ENCODE measurements at regions of chr2 and their contacts with region 1.

Region 1: DNA sequence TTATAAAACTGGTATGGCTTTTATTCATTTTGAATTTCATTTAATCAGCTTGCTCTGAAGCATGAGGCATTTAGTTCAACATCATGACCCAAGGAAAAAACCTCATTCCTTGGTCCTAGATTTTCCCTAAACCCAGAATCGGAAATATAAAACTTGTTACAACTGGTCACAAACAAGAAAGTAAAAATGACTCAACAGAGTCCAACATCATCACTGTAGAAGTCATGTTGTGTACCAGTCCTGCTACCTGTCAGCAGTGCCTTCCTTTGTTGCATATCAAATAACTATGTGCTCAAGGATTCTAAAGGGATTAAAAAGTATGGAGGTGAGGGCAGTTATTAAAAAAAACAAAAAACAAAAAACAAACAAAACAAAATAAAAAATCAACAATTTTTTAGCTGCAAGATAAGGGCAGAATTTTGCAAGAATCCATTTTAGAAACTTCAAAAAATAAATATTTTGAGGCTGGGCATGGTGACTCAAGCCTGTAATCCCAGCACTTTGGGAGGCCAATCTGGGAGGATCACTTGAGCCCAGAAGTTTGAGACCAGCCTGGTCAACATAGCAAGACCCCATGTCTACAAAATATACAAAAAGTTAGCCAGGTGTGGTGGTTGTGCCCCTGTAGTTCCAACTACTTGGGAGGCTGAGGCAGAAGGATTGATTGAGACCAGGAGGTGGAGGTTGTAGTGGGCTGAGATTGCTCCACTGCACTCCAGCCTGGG is 18.4 kb downstream of the NCKAP1 start:
- DNase-seq: peak; percentile 87
- H3K4me3 ChIP-seq: no peak overlapping the region
- H3K27ac ChIP-seq: peak overlapping the region; percentile 35
- H3K4me1 ChIP-seq: peaks cover 18% of the 10 kb centered on the region
- H3K27me3 ChIP-seq: no peaks in the 10 kb centered on the region
- CTCF ChIP-seq: no peak

Region 2: GRCh38 chr2:183037553-183038340 is 17.9 kb after region 1 on chr2:
- CTCF ChIA-PET with region 1: no interaction called
- dilution Hi-C with region 1: no loop called
- in situ Hi-C with region 1: no loop called
- intact Hi-C with region 1: loop called (anchors 2 kb)
- DNase-seq: peak; percentile 55
- H3K4me3 ChIP-seq: peak overlapping the region; percentile 62 to 99 (median 95)
- H3K27ac ChIP-seq: peak overlapping the region; percentile 95
- H3K4me1 ChIP-seq: peaks cover 13% of the 10 kb centered on the region
- H3K27me3 ChIP-seq: peaks cover 2% of the 10 kb centered on the region
- CTCF ChIP-seq: no peak

Region 3: GRCh38 chr2:183248866-183249567 is 229.1 kb after region 1 on chr2:
- CTCF ChIA-PET with region 1: interaction called, 15 read pairs
- dilution Hi-C with region 1: no loop called
- in situ Hi-C with region 1: no loop called
- intact Hi-C with region 1: no loop called
- DNase-seq: peak; percentile 42
- H3K4me3 ChIP-seq: no peak overlapping the region
- H3K27ac ChIP-seq: peak overlapping the region; percentile 91
- H3K4me1 ChIP-seq: peaks cover 25% of the 10 kb centered on the region
- H3K27me3 ChIP-seq: no peaks in the 10 kb centered on the region
- CTCF ChIP-seq: peak; percentile 47 to 53

Region 4: DNA sequence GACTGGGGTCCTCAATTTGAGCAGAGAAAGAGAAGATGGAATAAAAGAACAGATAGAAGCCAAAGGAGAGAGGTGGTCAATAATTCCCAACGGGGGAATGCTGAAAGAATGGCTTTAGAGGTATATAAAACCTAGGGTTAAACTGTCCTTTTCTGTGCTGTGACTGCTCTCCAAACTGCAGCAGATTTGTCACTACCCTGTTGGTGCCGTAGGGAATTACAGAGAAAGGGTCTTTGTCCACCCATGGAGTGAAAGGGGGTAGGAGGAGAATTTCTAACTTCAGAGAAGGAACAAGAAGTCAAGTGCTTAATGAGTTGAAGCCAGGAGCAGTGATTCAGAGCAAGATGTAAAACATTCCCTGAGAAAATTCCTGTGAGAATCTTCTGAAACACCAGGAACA is 590.8 kb after region 1 on chr2:
- CTCF ChIA-PET with region 1: no interaction called
- dilution Hi-C with region 1: no loop called
- in situ Hi-C with region 1: no loop called
- intact Hi-C with region 1: no loop called
- DNase-seq: no peak
- H3K4me3 ChIP-seq: no peak overlapping the region
- H3K27ac ChIP-seq: no peak overlapping the region
- H3K4me1 ChIP-seq: no peaks in the 10 kb centered on the region
- H3K27me3 ChIP-seq: no peaks in the 10 kb centered on the region
- CTCF ChIP-seq: peak in 1 of 2 donors; percentile 12

Measured in mammary epithelial cell (primary cell).